Panc1 (cell line): ENCODE measurements at regions of chr2 and their contacts with region 1.

Region 1: DNA sequence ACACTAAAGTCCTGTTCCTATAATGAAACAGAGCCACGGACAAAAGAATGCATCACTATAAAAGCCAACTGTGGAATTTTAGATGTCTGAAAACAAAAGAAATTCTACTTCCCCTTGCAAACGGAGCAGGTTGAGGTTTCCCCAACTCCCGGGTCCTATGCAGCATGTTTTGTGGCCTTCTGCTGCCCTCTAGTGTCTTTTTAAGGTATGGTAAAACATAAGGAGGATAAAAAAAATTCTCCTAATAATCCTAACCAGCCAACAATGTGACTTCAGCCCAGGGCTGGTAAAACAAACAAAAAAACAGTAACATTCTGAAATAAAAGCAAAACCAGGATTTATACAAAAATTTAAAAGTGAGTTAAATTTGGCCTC is 539.5 kb downstream of the NRXN1 start:
- DNase-seq: peak; percentile 10
- ATAC-seq: peak; percentile 82
- H3K4me3 ChIP-seq: no peak overlapping the region
- H3K27ac ChIP-seq: no peak overlapping the region
- H3K4me1 ChIP-seq: no peaks in the 10 kb centered on the region
- H3K27me3 ChIP-seq: no peaks in the 10 kb centered on the region; the same call in 1 of the 2 replicates
- CTCF ChIP-seq: peak; percentile 67

Region 2: DNA sequence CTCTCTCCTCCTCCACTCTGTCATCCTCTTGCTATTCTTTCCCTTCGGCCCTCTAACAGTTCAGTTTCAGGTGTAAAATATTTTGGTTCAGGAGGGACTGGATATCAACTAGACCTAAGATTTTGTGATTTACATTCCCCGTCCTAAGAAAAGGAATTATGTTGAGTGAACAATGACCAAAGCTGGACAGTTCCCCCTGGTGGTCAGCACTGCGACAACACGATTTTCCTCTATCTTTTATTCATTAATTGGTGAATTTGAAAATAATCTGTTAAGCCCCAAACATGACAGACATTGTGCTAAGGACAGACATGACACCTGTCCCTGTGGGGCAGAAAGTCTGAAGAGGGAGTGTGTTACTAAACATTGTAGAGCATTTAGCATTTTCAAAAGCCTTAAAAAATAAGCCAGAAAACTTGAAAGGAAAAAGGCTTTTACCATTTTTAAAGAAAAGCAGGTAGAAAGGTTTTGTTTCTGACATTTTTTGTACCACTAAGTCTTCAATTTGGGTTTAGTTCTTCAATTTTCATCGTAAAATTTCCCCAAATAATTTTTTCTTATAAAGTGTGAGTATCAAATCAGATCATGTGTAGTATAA is 1903.2 kb before region 1 on chr2:
- CTCF ChIA-PET with region 1: no interaction called
- POLR2A ChIA-PET with region 1: no interaction called
- in situ Hi-C with region 1: no loop called
- intact Hi-C with region 1: loop called (anchors 10 kb)
- DNase-seq: peak; percentile 35
- ATAC-seq: peak; percentile 70; the same call in 1 of the 2 replicates
- H3K4me3 ChIP-seq: peak overlapping the region in 1 of 2 experiments; percentile 7; a peak in 1 of 4 replicates
- H3K27ac ChIP-seq: no peak overlapping the region
- H3K4me1 ChIP-seq: no peaks in the 10 kb centered on the region
- H3K27me3 ChIP-seq: no peaks in the 10 kb centered on the region
- CTCF ChIP-seq: peak; percentile 79

Region 3: DNA sequence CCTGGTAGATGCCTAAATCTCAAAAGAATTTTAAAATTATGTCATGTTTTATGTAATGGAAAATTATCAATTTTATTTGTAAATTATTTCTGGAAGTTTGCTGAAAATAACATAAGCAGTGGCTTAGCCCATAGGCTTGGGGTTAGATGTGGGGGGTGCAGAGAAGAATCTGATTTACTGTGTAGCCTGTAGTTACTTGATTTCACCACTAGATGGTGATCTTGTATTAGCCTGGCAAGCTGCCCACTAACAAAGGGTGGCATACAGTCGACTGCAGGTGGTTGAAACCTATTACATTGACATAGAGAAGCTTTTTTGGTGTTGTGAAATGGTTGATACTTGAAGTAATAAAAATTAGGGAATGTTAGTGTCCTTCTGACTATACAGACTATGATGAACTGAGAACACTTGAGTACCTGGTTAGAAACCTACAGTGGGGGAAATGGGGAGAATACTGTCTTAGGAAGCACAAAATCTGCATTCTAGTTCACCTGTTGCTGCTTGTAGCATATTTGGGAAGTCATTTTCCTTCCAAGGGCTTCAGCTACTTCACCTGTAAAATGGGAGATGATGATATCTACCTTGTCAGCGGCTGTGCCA is 1545.9 kb before region 1 on chr2:
- CTCF ChIA-PET with region 1: no interaction called
- POLR2A ChIA-PET with region 1: no interaction called
- in situ Hi-C with region 1: no loop called
- intact Hi-C with region 1: loop called (anchors 5 kb)
- DNase-seq: peak; percentile 28
- ATAC-seq: peak; percentile 91
- H3K4me3 ChIP-seq: no peak overlapping the region
- H3K27ac ChIP-seq: no peak overlapping the region
- H3K4me1 ChIP-seq: no peaks in the 10 kb centered on the region
- H3K27me3 ChIP-seq: peaks cover 3% of the 10 kb centered on the region; the same call in 1 of the 2 replicates
- CTCF ChIP-seq: peak; percentile 86

Region 4: DNA sequence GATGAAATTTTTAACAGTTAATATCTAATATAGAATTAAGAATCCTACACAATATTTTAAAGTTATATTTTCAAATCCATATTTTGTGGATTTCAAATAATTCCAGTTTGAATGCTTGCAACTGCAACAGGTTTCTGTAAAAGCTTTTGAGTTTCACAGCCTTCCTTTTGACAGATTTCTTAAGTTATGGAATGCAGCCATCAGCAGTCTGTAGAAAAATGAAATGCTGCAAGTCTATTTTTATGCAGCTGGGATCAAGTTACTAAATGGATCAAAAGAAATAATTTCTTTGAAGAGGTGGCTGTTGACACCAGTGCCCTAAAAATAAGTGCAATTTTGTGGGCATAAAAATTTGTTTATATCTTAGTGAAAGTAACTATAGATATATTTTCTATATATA is 117.8 kb before region 1 on chr2:
- CTCF ChIA-PET with region 1: no interaction called
- POLR2A ChIA-PET with region 1: no interaction called
- in situ Hi-C with region 1: no loop called
- intact Hi-C with region 1: no loop called
- DNase-seq: no peak
- ATAC-seq: no peak
- H3K4me3 ChIP-seq: no peak overlapping the region
- H3K27ac ChIP-seq: no peak overlapping the region
- H3K4me1 ChIP-seq: no peaks in the 10 kb centered on the region
- H3K27me3 ChIP-seq: no peaks in the 10 kb centered on the region
- CTCF ChIP-seq: no peak